ENCODE measurements at regions of chr1 and their contacts with region 1.

Region 1: GRCh38 chr1:152001391-152002249 is 8.0 kb upstream of the S100A10 start:
- DNase-seq: peak; percentile 66 to 79 (median 70)
- H3K4me3 ChIP-seq: no peak overlapping the region
- H3K4me3 Mint-ChIP-seq: no peak overlapping the region
- H3K27ac ChIP-seq: no peak overlapping the region
- H3K27ac Mint-ChIP-seq: peak overlapping the region in 3 of 7 donors; percentile 36 to 60 (median 51)
- H3K4me1 ChIP-seq: no peaks in the 10 kb centered on the region
- H3K4me1 Mint-ChIP-seq: peaks cover 0 to 3% (median under 1%) of the 10 kb centered on the region in 4 donors
- H3K27me3 ChIP-seq: no peaks in the 10 kb centered on the region
- H3K27me3 Mint-ChIP-seq: no peaks in the 10 kb centered on the region

Region 2: GRCh38 chr1:151888972-151889570 is 112.5 kb before region 1 on chr1:
- CTCF ChIA-PET with region 1: interaction called, 118 read pairs
- POLR2A ChIA-PET with region 1: interaction called, 3 read pairs
- intact Hi-C with region 1: loop called (anchors 1 kb)
- DNase-seq: peak in 4 of 5 donors; percentile 27 to 45 (median 34)
- H3K4me3 ChIP-seq: no peak overlapping the region
- H3K4me3 Mint-ChIP-seq: no peak overlapping the region
- H3K27ac ChIP-seq: no peak overlapping the region
- H3K27ac Mint-ChIP-seq: peak overlapping the region in 6 of 7 donors; percentile 18 to 84 (median 64)
- H3K4me1 ChIP-seq: peaks cover 21% of the 10 kb centered on the region
- H3K4me1 Mint-ChIP-seq: peaks cover 27 to 38% (median 33%) of the 10 kb centered on the region in 4 donors
- H3K27me3 ChIP-seq: no peaks in the 10 kb centered on the region
- H3K27me3 Mint-ChIP-seq: no peaks in the 10 kb centered on the region

Region 3: GRCh38 chr1:151909150-151910149 is 92.2 kb before region 1 on chr1 and contains the start of gene THEM4:
- CTCF ChIA-PET with region 1: interaction called, 16 read pairs
- POLR2A ChIA-PET with region 1: interaction called, 3 read pairs
- intact Hi-C with region 1: no loop called
- DNase-seq: peak; percentile 81 to 90 (median 83)
- H3K4me3 ChIP-seq: peak within 1 kb of the TSS; percentile 76 to 79
- H3K4me3 Mint-ChIP-seq: peak within 1 kb of the TSS; percentile 83 to 91 (median 86)
- H3K27ac ChIP-seq: peak within 1 kb of the TSS; percentile 61
- H3K27ac Mint-ChIP-seq: peak within 1 kb of the TSS; percentile 73 to 94 (median 89)
- H3K4me1 ChIP-seq: peaks cover 53% of the 10 kb centered on the region
- H3K4me1 Mint-ChIP-seq: peaks cover 22 to 48% (median 39%) of the 10 kb centered on the region in 4 donors
- H3K27me3 ChIP-seq: no peaks in the 10 kb centered on the region
- H3K27me3 Mint-ChIP-seq: no peaks in the 10 kb centered on the region
- total RNA-seq, gene THEM4: 105 to 106 TPM

Region 4: DNA sequence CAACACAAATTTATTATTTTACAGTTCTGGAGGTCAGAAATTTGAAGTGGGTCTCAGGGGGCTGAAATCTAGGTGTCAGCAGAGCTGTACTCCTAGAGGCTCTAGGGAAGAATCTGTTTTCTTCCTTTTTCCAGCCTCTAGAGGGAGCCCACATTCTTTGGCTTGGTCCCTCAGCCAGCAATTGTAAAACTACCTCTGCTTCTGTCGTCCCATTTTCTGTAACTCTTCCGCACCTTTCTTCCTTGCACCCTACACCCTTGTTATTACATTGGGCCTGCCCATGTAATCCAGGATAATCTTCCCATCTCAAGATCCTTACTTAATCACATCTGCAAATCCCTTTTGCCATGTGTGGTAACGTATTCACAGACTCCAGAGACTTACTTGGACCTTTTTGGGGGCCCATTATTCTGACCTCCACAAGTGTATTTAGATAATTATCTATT is 67.5 kb before region 1 on chr1:
- CTCF ChIA-PET with region 1: interaction called, 340 read pairs
- POLR2A ChIA-PET with region 1: interaction called, 3 read pairs
- intact Hi-C with region 1: loop called (anchors 1 kb)
- DNase-seq: peak; percentile 52 to 75 (median 69)
- H3K4me3 ChIP-seq: no peak overlapping the region
- H3K4me3 Mint-ChIP-seq: peak overlapping the region in 1 of 8 donors; percentile 4
- H3K27ac ChIP-seq: no peak overlapping the region
- H3K27ac Mint-ChIP-seq: peak overlapping the region in 5 of 7 donors; percentile 31 to 91 (median 65)
- H3K4me1 ChIP-seq: no peaks in the 10 kb centered on the region
- H3K4me1 Mint-ChIP-seq: peaks cover 4 to 6% (median 4%) of the 10 kb centered on the region in 4 donors
- H3K27me3 ChIP-seq: no peaks in the 10 kb centered on the region
- H3K27me3 Mint-ChIP-seq: peaks cover 0 to 4% of the 10 kb centered on the region in 2 donors

Region 5: DNA sequence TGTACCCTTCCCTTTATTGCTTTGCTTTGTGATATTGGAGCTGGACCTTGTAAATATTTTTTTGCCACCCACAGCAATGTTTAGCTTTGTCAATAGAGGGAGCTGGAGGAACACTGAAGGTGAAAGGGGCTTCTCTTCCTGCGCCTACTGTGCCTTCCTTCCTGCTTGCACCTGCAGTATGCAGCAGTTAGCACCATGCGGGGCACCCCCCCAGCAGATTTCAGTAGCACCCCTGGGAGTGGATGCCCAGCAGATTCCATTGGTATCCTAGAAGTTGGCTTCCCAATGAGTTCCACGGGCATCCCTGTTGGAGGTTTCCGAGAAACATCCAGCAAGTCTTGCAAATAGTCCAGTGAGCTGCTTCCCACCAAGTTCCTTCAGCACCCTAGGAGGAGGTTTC is 33.6 kb before region 1 on chr1:
- CTCF ChIA-PET with region 1: interaction called, 270 read pairs
- POLR2A ChIA-PET with region 1: interaction called, 18 read pairs
- intact Hi-C with region 1: no loop called
- DNase-seq: peak; percentile 60 to 75 (median 73)
- H3K4me3 ChIP-seq: no peak overlapping the region
- H3K4me3 Mint-ChIP-seq: peak overlapping the region in 1 of 8 donors; percentile 42
- H3K27ac ChIP-seq: no peak overlapping the region
- H3K27ac Mint-ChIP-seq: peak overlapping the region in 2 of 7 donors; percentile 65 to 68
- H3K4me1 ChIP-seq: peaks cover 9% of the 10 kb centered on the region
- H3K4me1 Mint-ChIP-seq: peaks cover 8 to 26% (median 13%) of the 10 kb centered on the region in 4 donors
- H3K27me3 ChIP-seq: no peaks in the 10 kb centered on the region
- H3K27me3 Mint-ChIP-seq: peaks cover 0 to 3% of the 10 kb centered on the region in 2 donors

Region 6: DNA sequence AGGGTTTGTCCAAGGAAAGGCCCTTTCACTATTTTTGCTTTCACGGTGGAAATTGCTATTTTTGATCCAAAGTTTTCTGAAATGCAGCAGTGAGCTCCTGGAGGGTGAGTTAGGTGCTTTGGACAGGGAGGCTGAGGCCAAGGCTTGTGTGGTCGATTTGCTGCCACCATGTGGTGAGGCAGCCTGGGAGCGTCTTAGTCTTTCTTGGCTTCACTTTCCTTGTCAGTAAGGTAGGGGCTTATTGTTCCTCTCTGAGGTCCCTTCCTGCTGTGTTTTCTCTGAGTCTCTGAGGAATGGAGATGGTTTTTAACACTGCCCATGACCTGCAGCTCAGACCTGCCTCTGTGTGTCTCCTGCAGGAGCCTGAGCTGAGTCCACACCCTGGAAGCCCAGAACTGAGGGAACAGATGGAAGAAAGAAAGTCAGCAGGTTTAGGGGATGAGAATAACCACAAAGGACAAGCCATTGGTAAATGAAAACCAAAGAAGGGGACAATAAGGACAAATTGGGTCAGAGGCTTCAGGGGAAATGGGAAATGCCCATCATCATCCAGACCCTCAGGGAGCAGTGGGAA is 12.1 kb after region 1 on chr1:
- CTCF ChIA-PET with region 1: interaction called, 92 read pairs
- POLR2A ChIA-PET with region 1: no interaction called
- intact Hi-C with region 1: no loop called
- DNase-seq: peak in 2 of 5 donors; percentile 31 to 33
- H3K4me3 ChIP-seq: no peak overlapping the region
- H3K4me3 Mint-ChIP-seq: no peak overlapping the region
- H3K27ac ChIP-seq: no peak overlapping the region
- H3K27ac Mint-ChIP-seq: no peak overlapping the region
- H3K4me1 ChIP-seq: no peaks in the 10 kb centered on the region
- H3K4me1 Mint-ChIP-seq: peaks cover 0 to 5% (median 2%) of the 10 kb centered on the region in 4 donors
- H3K27me3 ChIP-seq: no peaks in the 10 kb centered on the region
- H3K27me3 Mint-ChIP-seq: peaks cover 2 to 3% of the 10 kb centered on the region in 2 donors

Region 7: GRCh38 chr1:152061952-152062351 is 60.3 kb after region 1 on chr1:
- CTCF ChIA-PET with region 1: no interaction called
- POLR2A ChIA-PET with region 1: no interaction called
- intact Hi-C with region 1: no loop called
- DNase-seq: no peak
- H3K4me3 ChIP-seq: no peak overlapping the region
- H3K4me3 Mint-ChIP-seq: no peak overlapping the region
- H3K27ac ChIP-seq: no peak overlapping the region
- H3K27ac Mint-ChIP-seq: no peak overlapping the region
- H3K4me1 ChIP-seq: no peaks in the 10 kb centered on the region
- H3K4me1 Mint-ChIP-seq: no peaks in the 10 kb centered on the region
- H3K27me3 ChIP-seq: peaks cover 5% of the 10 kb centered on the region
- H3K27me3 Mint-ChIP-seq: peaks cover 13 to 23% of the 10 kb centered on the region in 2 donors

Measured in CD4-positive, alpha-beta memory T cell (primary cell).